ENCODE measurements at regions of chr12 and their contacts with region 1.

Region 1: GRCh38 chr12:31659087-31659933 is at the start of gene ETFBKMT:
- DNase-seq: peak; percentile 88
- ATAC-seq: peak; percentile 98
- H3K4me3 Mint-ChIP-seq: peak within 1 kb of the TSS; percentile 96
- H3K27ac Mint-ChIP-seq: peak within 1 kb of the TSS; percentile 99
- H3K4me1 Mint-ChIP-seq: peaks cover 35% of the 10 kb centered on the region
- H3K27me3 Mint-ChIP-seq: no peaks in the 10 kb centered on the region
- CTCF ChIP-seq: no peak
- total RNA-seq, gene ETFBKMT: 0.91 and 2.0 TPM in 2 replicates

Region 2: GRCh38 chr12:31406345-31406744 is 253.0 kb before region 1 on chr12:
- CTCF ChIA-PET with region 1: interaction called, 34 read pairs
- POLR2A ChIA-PET with region 1: interaction called, 5 read pairs
- intact Hi-C with region 1: no loop called
- DNase-seq: no peak
- ATAC-seq: peak; percentile 39
- H3K4me3 Mint-ChIP-seq: peak overlapping the region; percentile 65
- H3K27ac Mint-ChIP-seq: peak overlapping the region; percentile 77
- H3K4me1 Mint-ChIP-seq: peaks cover 33% of the 10 kb centered on the region
- H3K27me3 Mint-ChIP-seq: no peaks in the 10 kb centered on the region
- CTCF ChIP-seq: no peak

Region 3: GRCh38 chr12:31813305-31813704 is 154.0 kb after region 1 on chr12:
- CTCF ChIA-PET with region 1: no interaction called
- POLR2A ChIA-PET with region 1: interaction called, 6 read pairs
- intact Hi-C with region 1: loop called (anchors 1 kb)
- DNase-seq: no peak
- ATAC-seq: no peak
- H3K4me3 Mint-ChIP-seq: no peak overlapping the region
- H3K27ac Mint-ChIP-seq: peak overlapping the region; percentile 69
- H3K4me1 Mint-ChIP-seq: peaks cover 45% of the 10 kb centered on the region
- H3K27me3 Mint-ChIP-seq: no peaks in the 10 kb centered on the region
- CTCF ChIP-seq: no peak

Region 4: DNA sequence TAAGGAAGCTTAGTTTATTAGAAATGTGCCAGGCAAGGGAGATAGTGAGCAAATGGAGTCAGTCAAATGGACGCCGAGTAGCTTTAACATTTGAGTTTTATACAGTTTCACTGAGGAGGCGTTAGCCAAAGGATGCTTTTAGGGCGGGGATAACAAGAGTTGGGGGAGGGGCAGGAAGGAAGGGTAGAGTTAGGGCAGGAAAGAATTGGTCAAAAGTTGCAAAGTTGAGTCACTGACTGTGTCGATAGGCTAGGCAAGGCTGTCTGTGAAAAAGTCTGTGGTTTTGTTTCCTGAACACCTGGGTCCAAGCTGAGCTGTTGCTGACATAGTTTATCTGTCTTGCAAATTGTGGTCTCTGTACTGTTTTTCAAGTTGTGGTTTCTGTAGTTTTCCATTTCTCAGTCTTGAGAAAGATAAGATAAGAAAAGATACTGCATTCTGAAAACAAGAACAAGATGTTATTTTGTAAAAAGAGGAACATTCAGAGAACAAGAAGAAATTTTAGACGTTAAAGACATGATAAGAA is 237.3 kb after region 1 on chr12:
- CTCF ChIA-PET with region 1: no interaction called
- POLR2A ChIA-PET with region 1: interaction called, 12 read pairs
- intact Hi-C with region 1: loop called (anchors 1 kb)
- DNase-seq: peak; percentile 58
- ATAC-seq: peak; percentile 93
- H3K4me3 Mint-ChIP-seq: peak overlapping the region; percentile 73
- H3K27ac Mint-ChIP-seq: peak overlapping the region; percentile 96
- H3K4me1 Mint-ChIP-seq: peaks cover 69% of the 10 kb centered on the region
- H3K27me3 Mint-ChIP-seq: no peaks in the 10 kb centered on the region
- CTCF ChIP-seq: no peak

Region 5: GRCh38 chr12:32264961-32265360 is 605.7 kb after region 1 on chr12:
- CTCF ChIA-PET with region 1: no interaction called
- POLR2A ChIA-PET with region 1: interaction called, 3 read pairs
- intact Hi-C with region 1: loop called (anchors 1 kb)
- DNase-seq: peak; percentile 31
- ATAC-seq: peak; percentile 67
- H3K4me3 Mint-ChIP-seq: peak overlapping the region; percentile 52
- H3K27ac Mint-ChIP-seq: peak overlapping the region; percentile 97
- H3K4me1 Mint-ChIP-seq: peaks cover 43% of the 10 kb centered on the region
- H3K27me3 Mint-ChIP-seq: no peaks in the 10 kb centered on the region
- CTCF ChIP-seq: no peak

Region 6: DNA sequence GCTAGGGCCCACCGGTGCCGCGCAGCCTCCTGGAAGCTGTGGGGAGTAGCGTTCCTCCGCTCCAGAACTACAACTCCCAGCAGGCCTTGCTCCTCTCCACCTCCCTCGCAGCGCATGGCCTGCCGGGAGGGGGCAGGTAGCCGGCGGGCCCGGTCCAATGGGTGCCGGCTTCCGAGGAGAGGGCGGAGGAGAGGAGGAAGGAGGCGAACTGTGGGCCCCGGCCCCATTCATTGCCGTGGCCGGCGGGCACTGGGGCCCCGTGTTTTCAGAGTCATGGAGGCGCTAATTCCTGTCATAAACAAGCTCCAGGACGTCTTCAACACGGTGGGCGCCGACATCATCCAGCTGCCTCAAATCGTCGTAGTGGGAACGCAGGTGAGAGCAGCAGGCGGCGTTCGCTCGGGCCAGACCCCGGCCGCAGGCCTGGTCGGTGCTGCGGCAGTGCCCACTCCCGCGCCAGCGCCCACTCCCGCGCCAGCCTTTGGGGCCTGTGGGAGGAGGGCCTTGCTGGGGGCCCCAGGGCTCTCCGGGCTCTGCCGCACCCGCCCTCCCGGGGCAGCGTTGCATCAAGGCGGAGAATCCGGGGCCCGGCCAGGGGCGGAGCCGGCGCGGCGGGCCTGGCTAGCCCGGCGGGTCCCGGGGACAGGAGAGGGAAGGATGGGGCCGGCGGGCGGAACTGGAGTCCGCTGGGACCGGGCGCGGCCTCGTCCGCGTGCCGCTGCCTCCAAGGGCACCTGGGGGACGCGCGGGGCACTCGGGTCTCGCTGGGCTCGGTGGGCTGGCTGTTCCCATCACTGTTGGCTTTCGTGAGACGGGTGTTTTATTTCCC is 1020.0 kb after region 1 on chr12 and contains the start of gene DNM1L:
- CTCF ChIA-PET with region 1: no interaction called
- POLR2A ChIA-PET with region 1: no interaction called
- intact Hi-C with region 1: loop called (anchors 1 kb)
- DNase-seq: peak; percentile 86
- ATAC-seq: peak; percentile 95
- H3K4me3 Mint-ChIP-seq: peak within 1 kb of the TSS; percentile 90
- H3K27ac Mint-ChIP-seq: peak within 1 kb of the TSS; percentile 83
- H3K4me1 Mint-ChIP-seq: peaks cover 36% of the 10 kb centered on the region
- H3K27me3 Mint-ChIP-seq: no peaks in the 10 kb centered on the region
- CTCF ChIP-seq: no peak
- total RNA-seq, gene DNM1L: 67.8 and 83.1 TPM in 2 replicates